Activated T-helper 1 cell treated with anti-CD3 and anti-CD28 coated beads, Interleukin-12 subunit alpha, Interleukin-12 subunit beta, Interleukin-2, Interleukin-4 antibody, amounts not matched to agents 30 ng/mL and 10 ng/mL and 1 ng/mL, durations not matched to agents 14 hours and 24 hours and 36 hours (primary cell): ENCODE measurements at regions of chr6 and their contacts with region 1.

Region 1: GRCh38 chr6:106339334-106340029 is 13.9 kb upstream of the ATG5 start:
- DNase-seq: peak; percentile 27
- H3K4me3 Mint-ChIP-seq: no peak overlapping the region
- H3K27ac Mint-ChIP-seq: no peak overlapping the region
- H3K4me1 Mint-ChIP-seq: peaks cover 8% of the 10 kb centered on the region
- H3K27me3 Mint-ChIP-seq: peaks cover 18% of the 10 kb centered on the region

Region 2: GRCh38 chr6:106181664-106182418 is 157.6 kb before region 1 on chr6:
- intact Hi-C with region 1: no loop called
- DNase-seq: no peak
- H3K4me3 Mint-ChIP-seq: no peak overlapping the region
- H3K27ac Mint-ChIP-seq: peak overlapping the region; percentile 25
- H3K4me1 Mint-ChIP-seq: peaks cover 52% of the 10 kb centered on the region
- H3K27me3 Mint-ChIP-seq: no peaks in the 10 kb centered on the region

Region 3: DNA sequence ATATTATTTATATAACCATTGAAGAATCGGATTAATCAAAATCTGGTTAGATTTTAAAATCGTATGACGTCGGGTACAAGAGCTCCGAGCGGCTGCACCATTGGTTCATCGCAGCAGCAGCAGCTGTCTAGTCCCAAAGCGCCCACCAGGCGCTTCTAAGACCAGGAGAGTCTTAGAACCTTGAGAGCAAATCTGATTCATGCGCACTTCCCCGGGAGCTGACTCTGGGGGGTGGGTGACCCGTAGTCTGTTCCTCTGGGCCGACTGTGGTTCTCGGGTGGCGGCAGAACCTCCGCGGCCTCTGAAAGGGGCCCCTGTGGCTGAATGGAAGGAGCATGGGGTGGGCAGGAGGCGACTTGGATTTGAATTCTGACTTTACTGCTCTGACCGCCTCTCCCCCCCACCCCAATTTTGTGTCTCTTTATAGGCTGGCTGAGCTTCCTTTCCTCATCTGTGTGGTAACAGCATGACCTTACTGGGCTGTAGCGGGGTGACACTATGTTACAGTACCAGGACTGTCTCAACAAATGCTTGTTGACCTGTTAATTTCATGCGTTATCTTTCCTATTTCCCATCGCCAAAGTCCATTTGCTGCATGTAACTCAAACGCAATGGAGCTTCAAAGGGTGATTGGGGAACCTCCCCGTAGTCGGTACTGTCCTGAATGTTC is 170.1 kb after region 1 on chr6:
- intact Hi-C with region 1: no loop called
- DNase-seq: no peak
- H3K4me3 Mint-ChIP-seq: peak overlapping the region; percentile 91
- H3K27ac Mint-ChIP-seq: no peak overlapping the region
- H3K4me1 Mint-ChIP-seq: peaks cover 38% of the 10 kb centered on the region
- H3K27me3 Mint-ChIP-seq: peaks cover 33% of the 10 kb centered on the region

Region 4: GRCh38 chr6:106979427-106979884 is 640.0 kb after region 1 on chr6:
- intact Hi-C with region 1: loop called (anchors 1 kb)
- DNase-seq: peak; percentile 60
- H3K4me3 Mint-ChIP-seq: no peak overlapping the region
- H3K27ac Mint-ChIP-seq: no peak overlapping the region
- H3K4me1 Mint-ChIP-seq: no peaks in the 10 kb centered on the region
- H3K27me3 Mint-ChIP-seq: peaks cover 30% of the 10 kb centered on the region

Region 5: DNA sequence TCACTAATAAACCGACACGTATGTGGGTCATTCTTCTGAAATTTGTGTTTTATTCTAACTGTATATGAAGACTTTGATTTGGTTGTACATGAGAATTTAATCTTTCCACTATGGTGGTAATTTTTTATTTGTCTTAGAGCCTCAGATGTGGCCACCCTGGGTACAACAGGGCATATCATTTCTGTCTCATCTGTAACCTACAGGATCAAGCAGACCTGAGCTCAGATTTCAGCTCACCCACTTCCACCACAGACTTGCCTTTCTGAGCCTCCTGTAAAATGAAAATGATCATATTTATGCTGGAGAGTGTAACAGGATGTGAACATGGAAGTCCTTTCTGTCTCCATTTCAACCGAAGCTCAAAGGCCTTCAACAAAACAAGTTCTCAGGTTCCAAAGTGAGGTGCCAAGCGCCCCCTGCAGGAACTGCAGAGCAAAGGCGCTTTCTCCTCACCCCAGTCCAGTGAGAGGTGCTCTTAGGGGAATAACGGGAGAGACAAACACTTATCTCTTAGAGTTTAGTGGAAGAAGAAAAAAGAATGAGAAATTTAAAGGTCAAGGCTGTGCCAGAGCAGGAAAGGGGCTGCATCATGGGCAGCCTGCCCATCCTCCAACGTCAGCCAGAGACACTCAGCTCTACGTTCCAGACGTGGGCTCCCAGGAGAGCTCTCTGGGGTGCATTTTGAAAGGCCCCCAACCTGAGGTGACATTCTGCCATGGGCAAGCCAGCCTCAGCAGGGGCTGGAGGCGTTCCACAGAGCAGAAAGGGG is 658.1 kb after region 1 on chr6:
- intact Hi-C with region 1: loop called (anchors 1 kb)
- DNase-seq: peak; percentile 23
- H3K4me3 Mint-ChIP-seq: no peak overlapping the region
- H3K27ac Mint-ChIP-seq: no peak overlapping the region
- H3K4me1 Mint-ChIP-seq: no peaks in the 10 kb centered on the region
- H3K27me3 Mint-ChIP-seq: peaks cover 4% of the 10 kb centered on the region